ENCODE measurements at regions of chr19 and their contacts with region 1.

Region 1: GRCh38 chr19:55160128-55160985 is 2.8 kb upstream of the TNNI3 start:
- DNase-seq: peak; percentile 97
- H3K27ac ChIP-seq: peak overlapping the region; percentile 97
- CTCF ChIP-seq: peak; percentile 97

Region 2: GRCh38 chr19:55146078-55146704 is 14.2 kb before region 1 on chr19:
- CTCF ChIA-PET with region 1: interaction called, 31 read pairs
- POLR2A ChIA-PET with region 1: interaction called, 5 read pairs
- DNase-seq: peak; percentile 73
- H3K27ac ChIP-seq: peak overlapping the region; percentile 83
- CTCF ChIP-seq: peak; percentile 83